ENCODE measurements at regions of chr19 and their contacts with region 1.

Region 1: GRCh38 chr19:51259348-51260245 is 8.7 kb downstream of the SIGLECL1 start:
- DNase-seq: peak; percentile 61
- H3K4me3 Mint-ChIP-seq: no peak overlapping the region
- H3K27ac Mint-ChIP-seq: no peak overlapping the region
- H3K4me1 Mint-ChIP-seq: peaks cover 44% of the 10 kb centered on the region
- H3K27me3 Mint-ChIP-seq: peaks cover 26% of the 10 kb centered on the region

Region 2: GRCh38 chr19:51097166-51097738 is 162.3 kb before region 1 on chr19:
- intact Hi-C with region 1: no loop called
- DNase-seq: peak; percentile 53
- H3K4me3 Mint-ChIP-seq: no peak overlapping the region
- H3K27ac Mint-ChIP-seq: no peak overlapping the region
- H3K4me1 Mint-ChIP-seq: peaks cover 10% of the 10 kb centered on the region
- H3K27me3 Mint-ChIP-seq: no peaks in the 10 kb centered on the region

Region 3: GRCh38 chr19:51108066-51108804 is 151.4 kb before region 1 on chr19 and contains the start of gene CTU1:
- intact Hi-C with region 1: loop called (anchors 5 kb)
- DNase-seq: peak; percentile 99
- H3K4me3 Mint-ChIP-seq: peak within 1 kb of the TSS; percentile 84
- H3K27ac Mint-ChIP-seq: peak within 1 kb of the TSS; percentile 82
- H3K4me1 Mint-ChIP-seq: peaks cover 19% of the 10 kb centered on the region
- H3K27me3 Mint-ChIP-seq: no peaks in the 10 kb centered on the region
- total RNA-seq, gene CTU1: 9.7 and 11.0 TPM in 2 replicates

Region 4: GRCh38 chr19:51158474-51159129 is 101.0 kb before region 1 on chr19:
- intact Hi-C with region 1: loop called (anchors 1 kb)
- DNase-seq: peak; percentile 67
- H3K4me3 Mint-ChIP-seq: no peak overlapping the region
- H3K27ac Mint-ChIP-seq: no peak overlapping the region
- H3K4me1 Mint-ChIP-seq: peaks cover 32% of the 10 kb centered on the region
- H3K27me3 Mint-ChIP-seq: peaks cover 14% of the 10 kb centered on the region

Region 5: GRCh38 chr19:51219307-51219706 is 40.3 kb before region 1 on chr19:
- intact Hi-C with region 1: loop called (anchors 1 kb)
- DNase-seq: no peak
- H3K4me3 Mint-ChIP-seq: no peak overlapping the region
- H3K27ac Mint-ChIP-seq: no peak overlapping the region
- H3K4me1 Mint-ChIP-seq: peaks cover 28% of the 10 kb centered on the region
- H3K27me3 Mint-ChIP-seq: peaks cover 43% of the 10 kb centered on the region

Region 6: GRCh38 chr19:51226067-51226466 is 33.5 kb before region 1 on chr19:
- intact Hi-C with region 1: loop called (anchors 1 kb)
- DNase-seq: no peak
- H3K4me3 Mint-ChIP-seq: peak overlapping the region; percentile 76
- H3K27ac Mint-ChIP-seq: peak overlapping the region; percentile 51
- H3K4me1 Mint-ChIP-seq: peaks cover 54% of the 10 kb centered on the region
- H3K27me3 Mint-ChIP-seq: peaks cover 40% of the 10 kb centered on the region

Region 7: GRCh38 chr19:51338563-51339312 is 79.1 kb after region 1 on chr19:
- intact Hi-C with region 1: no loop called
- DNase-seq: peak; percentile 83
- H3K4me3 Mint-ChIP-seq: peak overlapping the region; percentile 95
- H3K27ac Mint-ChIP-seq: peak overlapping the region; percentile 89
- H3K4me1 Mint-ChIP-seq: peaks cover 23% of the 10 kb centered on the region
- H3K27me3 Mint-ChIP-seq: peaks cover 2% of the 10 kb centered on the region

Region 8: DNA sequence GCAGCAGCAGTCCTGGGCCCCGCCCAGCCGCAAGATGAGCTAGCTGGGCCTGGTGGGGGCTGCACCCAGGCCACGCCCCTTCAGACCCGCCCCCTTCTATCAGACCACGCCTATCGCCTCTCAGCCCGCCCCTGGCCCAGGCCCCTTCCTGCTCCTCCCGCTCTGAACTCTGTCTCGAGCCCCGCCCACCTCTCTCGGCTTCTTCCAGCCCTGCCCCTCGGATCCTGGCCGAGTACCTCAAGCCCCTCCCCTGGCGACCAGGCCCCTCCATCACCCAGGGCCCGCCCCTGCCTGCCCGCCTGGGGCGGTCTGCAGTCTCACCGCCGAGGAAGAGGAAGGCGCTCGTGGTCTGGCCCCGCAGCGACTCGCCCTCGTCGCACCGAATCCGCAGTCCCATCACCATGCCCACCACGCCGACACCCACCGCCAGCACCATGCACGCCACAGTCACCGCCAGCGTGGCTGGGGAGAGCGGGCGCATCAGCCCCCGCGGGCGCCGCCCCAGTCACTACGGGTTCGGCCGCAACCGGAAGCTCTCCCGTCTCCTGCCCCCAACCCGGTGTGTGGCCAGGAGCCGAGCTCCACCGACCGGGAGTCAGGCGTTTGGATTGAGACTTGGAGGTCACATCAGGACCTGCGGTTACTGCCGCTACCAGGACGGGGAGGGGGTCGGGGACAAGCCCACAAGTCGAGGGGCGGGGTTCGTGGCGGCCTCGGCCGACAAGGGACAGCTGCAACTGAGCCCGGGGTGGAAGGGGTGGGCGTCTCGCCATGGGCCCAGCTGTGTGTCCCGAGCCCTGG is 108.2 kb after region 1 on chr19:
- intact Hi-C with region 1: no loop called
- DNase-seq: peak; percentile 98
- H3K4me3 Mint-ChIP-seq: peak overlapping the region; percentile 98
- H3K27ac Mint-ChIP-seq: peak overlapping the region; percentile 95
- H3K4me1 Mint-ChIP-seq: peaks cover 49% of the 10 kb centered on the region
- H3K27me3 Mint-ChIP-seq: no peaks in the 10 kb centered on the region

Measured in activated T-helper 2 cell treated with anti-CD3 and anti-CD28 coated beads, Interferon-gamma antibody, Interleukin-2, Interleukin-4, amounts not matched to agents 10 μg/mL and 5 μg/mL and 100 μg/mL, durations not matched to agents 14 hours and 24 hours and 36 hours (primary cell).